Heart left ventricle (tissue), 16 donors: ENCODE measurements at regions of chr3 and their contacts with region 1.

Region 1: GRCh38 chr3:78659386-78659987 is 1108.3 kb downstream of the ROBO1 start:
- DNase-seq: no peak
- ATAC-seq: no peak
- H3K4me3 ChIP-seq: no peak overlapping the region
- H3K27ac ChIP-seq: no peak overlapping the region
- H3K4me1 ChIP-seq: no peaks in the 10 kb centered on the region
- H3K27me3 ChIP-seq: no peaks in the 10 kb centered on the region
- CTCF ChIP-seq: peak; percentile 51 to 77 (median 67)
- POLR2A ChIP-seq: no peak

Region 2: GRCh38 chr3:79027593-79027992 is 368.1 kb after region 1 on chr3:
- intact Hi-C with region 1: loop called (anchors 1 to 5 kb)
- DNase-seq: no peak
- ATAC-seq: no peak
- H3K4me3 ChIP-seq: no peak overlapping the region
- H3K27ac ChIP-seq: no peak overlapping the region
- H3K4me1 ChIP-seq: no peaks in the 10 kb centered on the region
- H3K27me3 ChIP-seq: no peaks in the 10 kb centered on the region
- CTCF ChIP-seq: no peak
- POLR2A ChIP-seq: no peak

Region 3: DNA sequence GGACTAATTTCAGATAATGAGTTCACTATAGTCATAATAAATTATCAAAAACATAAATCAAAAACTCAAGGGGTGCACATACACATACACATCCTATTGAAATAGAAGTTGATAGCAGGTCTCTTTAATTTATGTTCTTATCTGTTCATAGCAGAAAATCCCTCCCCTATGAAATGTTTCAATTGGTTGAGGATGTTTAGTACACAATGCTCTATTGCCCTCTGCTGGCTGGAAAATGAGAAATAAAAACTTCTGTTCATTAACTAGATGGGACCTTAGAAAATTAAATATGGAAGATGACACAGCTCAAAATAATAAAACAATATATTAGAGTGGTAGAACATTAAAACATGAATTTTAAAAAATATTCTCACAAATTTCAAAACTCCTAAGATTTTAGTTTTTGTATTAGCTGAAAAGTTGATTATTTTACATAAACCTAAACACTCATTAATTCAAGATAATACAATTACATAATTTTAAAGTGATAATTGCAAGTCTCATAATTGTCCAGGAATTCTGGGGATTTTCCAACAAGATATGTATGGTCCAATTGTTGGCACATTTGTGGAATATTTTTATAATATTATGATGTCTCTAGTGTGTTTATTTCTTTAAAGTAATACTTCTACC is 373.3 kb after region 1 on chr3:
- intact Hi-C with region 1: loop called (anchors 1 to 5 kb)
- DNase-seq: no peak
- ATAC-seq: no peak
- H3K4me3 ChIP-seq: no peak overlapping the region
- H3K27ac ChIP-seq: no peak overlapping the region
- H3K4me1 ChIP-seq: no peaks in the 10 kb centered on the region
- H3K27me3 ChIP-seq: no peaks in the 10 kb centered on the region
- CTCF ChIP-seq: peak; percentile 40 to 67 (median 54)
- POLR2A ChIP-seq: no peak

Region 4: DNA sequence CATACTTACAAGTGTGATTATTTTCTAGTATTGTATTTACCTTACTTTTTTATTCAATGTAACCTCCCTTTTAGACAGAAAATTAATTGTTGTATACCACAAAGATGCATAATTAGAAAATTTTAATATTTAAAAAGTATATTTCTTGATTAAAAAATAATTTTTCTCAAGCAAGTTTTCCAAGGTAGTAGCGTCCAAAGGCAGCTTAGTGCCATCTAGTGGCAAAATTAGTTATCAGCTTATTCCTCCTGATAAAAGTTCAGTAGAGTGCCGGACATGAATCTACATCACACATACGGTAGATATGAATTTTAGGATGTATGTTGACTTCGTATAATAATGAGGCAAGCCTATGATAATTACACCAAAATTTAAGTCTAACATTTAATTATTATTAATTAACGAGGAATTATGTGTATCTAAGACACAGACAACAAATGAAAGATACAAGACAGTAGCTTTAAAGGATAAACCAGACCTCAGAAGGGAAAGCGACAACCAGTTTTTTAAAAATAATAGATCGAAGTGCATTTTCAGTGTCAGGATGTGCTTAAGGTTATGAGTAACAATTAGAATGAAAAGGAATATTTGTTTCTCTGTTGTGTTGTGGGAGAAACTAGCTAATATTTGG is 702.4 kb after region 1 on chr3:
- intact Hi-C with region 1: loop called in 7 of 10 experiments (anchors 2 to 10 kb)
- DNase-seq: no peak
- ATAC-seq: peak in 1 of 4 donors; percentile 69
- H3K4me3 ChIP-seq: peak overlapping the region in 2 of 12 donors; percentile 1 to 26
- H3K27ac ChIP-seq: peak overlapping the region in 1 of 12 donors; percentile 31
- H3K4me1 ChIP-seq: no peaks in the 10 kb centered on the region
- H3K27me3 ChIP-seq: no peaks in the 10 kb centered on the region
- CTCF ChIP-seq: peak; percentile 53 to 81 (median 73)
- POLR2A ChIP-seq: no peak

Region 5: GRCh38 chr3:79490165-79491028 is 830.9 kb after region 1 on chr3:
- intact Hi-C with region 1: loop called in 6 of 10 experiments (anchors 5 to 10 kb)
- DNase-seq: peak in 4 of 5 donors; percentile 37 to 68 (median 46)
- ATAC-seq: peak in 1 of 4 donors; percentile 67
- H3K4me3 ChIP-seq: peak overlapping the region in 1 of 12 donors; percentile 6
- H3K27ac ChIP-seq: peak overlapping the region in 1 of 12 donors; percentile 41
- H3K4me1 ChIP-seq: peaks cover 0 to 6% (median 0%) of the 10 kb centered on the region in 12 donors
- H3K27me3 ChIP-seq: no peaks in the 10 kb centered on the region
- CTCF ChIP-seq: no peak
- POLR2A ChIP-seq: no peak

Region 6: GRCh38 chr3:79497447-79498111 is 838.1 kb after region 1 on chr3:
- intact Hi-C with region 1: loop called in 6 of 10 experiments (anchors 5 to 10 kb)
- DNase-seq: no peak
- ATAC-seq: no peak
- H3K4me3 ChIP-seq: no peak overlapping the region
- H3K27ac ChIP-seq: no peak overlapping the region
- H3K4me1 ChIP-seq: no peaks in the 10 kb centered on the region
- H3K27me3 ChIP-seq: no peaks in the 10 kb centered on the region
- CTCF ChIP-seq: peak; percentile 37 to 69 (median 56)
- POLR2A ChIP-seq: no peak